Heart right ventricle (tissue), 16 donors: ENCODE measurements at regions of chr21 and their contacts with region 1.

Region 1: GRCh38 chr21:41885341-41886029 is 6.3 kb upstream of the PRDM15 start:
- DNase-seq: no peak
- ATAC-seq: no peak
- H3K4me3 ChIP-seq: no peak overlapping the region
- H3K27ac ChIP-seq: no peak overlapping the region
- H3K4me1 ChIP-seq: no peaks in the 10 kb centered on the region
- H3K27me3 ChIP-seq: no peaks in the 10 kb centered on the region
- CTCF ChIP-seq: no peak

Region 2: DNA sequence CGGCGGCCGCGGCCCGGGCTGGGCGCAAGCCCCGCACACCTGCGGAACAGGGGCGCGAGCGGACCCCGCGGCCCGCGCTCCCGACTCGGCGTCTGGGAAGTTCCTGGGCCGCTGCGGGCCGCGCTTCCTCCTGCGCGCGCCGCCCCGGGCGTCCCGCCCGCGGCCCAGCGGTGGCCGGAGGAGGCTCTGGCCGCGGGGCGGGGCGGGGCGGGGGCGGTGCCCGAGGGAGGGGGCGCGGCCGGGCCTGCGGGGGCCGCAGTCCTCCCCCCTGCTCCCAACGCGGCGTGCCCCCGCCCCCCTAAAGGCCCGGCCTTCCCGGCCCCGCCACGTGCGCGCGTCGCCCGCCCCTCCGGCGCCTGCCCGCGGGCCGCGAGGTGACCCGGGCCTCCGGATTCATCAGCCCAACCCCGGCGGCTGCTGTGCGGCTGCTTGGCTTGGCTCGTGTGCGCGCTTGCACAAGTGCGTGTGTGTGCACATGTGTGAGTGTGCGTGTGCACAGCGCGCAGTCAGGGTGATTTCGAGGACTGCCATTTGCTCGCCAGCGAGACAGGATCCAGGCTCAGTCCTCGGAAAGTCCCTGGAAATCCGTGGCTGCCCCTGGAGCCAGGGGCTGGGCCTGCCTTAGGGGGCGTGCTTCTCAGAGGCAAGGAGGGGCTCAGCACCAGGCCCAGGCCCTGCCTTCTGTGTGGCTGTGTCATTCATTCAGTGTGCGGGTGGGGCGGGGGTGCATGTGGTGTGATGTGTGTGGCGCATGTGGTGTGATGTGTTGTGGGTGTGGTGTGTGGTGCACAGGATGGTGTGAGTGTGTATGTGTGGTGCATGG is 68.6 kb after region 1 on chr21 and contains the start of gene C2CD2:
- intact Hi-C with region 1: loop called in 1 of 10 experiments (anchors 10 kb)
- DNase-seq: peak; percentile 69 to 82
- ATAC-seq: peak; percentile 64 to 89 (median 77)
- H3K4me3 ChIP-seq: peak within 1 kb of the TSS; percentile 12 to 91 (median 80)
- H3K27ac ChIP-seq: peak within 1 kb of the TSS; percentile 50 to 88 (median 79)
- H3K4me1 ChIP-seq: peaks cover 11 to 66% (median 41%) of the 10 kb centered on the region in 9 donors
- H3K27me3 ChIP-seq: peaks cover 0 to 9% (median 0%) of the 10 kb centered on the region in 7 donors
- CTCF ChIP-seq: peak in 2 of 9 donors; percentile 11 to 18
- total RNA-seq, gene C2CD2: 4.5 to 11.1 (median 6.9) TPM